Posterior vena cava (tissue), 2 donors: ENCODE measurements at regions of chr16 and their contacts with region 1.

Region 1: GRCh38 chr16:52597580-52598483 is 50.9 kb upstream of the TOX3 start:
- DNase-seq: no peak

Region 2: GRCh38 chr16:53099318-53100130 is 501.7 kb after region 1 on chr16:
- intact Hi-C with region 1: loop called in 1 of 2 experiments (anchors 5 kb)
- DNase-seq: peak; percentile 96